ENCODE measurements at regions of chr2 and their contacts with region 1.

Region 1: GRCh38 chr2:135004005-135004746 is 43.1 kb downstream of the MAP3K19 start:
- DNase-seq: peak; percentile 85
- H3K4me3 Mint-ChIP-seq: no peak overlapping the region
- H3K27ac Mint-ChIP-seq: no peak overlapping the region
- H3K4me1 Mint-ChIP-seq: no peaks in the 10 kb centered on the region
- H3K27me3 Mint-ChIP-seq: no peaks in the 10 kb centered on the region
- CTCF ChIP-seq: peak; percentile 95

Region 2: DNA sequence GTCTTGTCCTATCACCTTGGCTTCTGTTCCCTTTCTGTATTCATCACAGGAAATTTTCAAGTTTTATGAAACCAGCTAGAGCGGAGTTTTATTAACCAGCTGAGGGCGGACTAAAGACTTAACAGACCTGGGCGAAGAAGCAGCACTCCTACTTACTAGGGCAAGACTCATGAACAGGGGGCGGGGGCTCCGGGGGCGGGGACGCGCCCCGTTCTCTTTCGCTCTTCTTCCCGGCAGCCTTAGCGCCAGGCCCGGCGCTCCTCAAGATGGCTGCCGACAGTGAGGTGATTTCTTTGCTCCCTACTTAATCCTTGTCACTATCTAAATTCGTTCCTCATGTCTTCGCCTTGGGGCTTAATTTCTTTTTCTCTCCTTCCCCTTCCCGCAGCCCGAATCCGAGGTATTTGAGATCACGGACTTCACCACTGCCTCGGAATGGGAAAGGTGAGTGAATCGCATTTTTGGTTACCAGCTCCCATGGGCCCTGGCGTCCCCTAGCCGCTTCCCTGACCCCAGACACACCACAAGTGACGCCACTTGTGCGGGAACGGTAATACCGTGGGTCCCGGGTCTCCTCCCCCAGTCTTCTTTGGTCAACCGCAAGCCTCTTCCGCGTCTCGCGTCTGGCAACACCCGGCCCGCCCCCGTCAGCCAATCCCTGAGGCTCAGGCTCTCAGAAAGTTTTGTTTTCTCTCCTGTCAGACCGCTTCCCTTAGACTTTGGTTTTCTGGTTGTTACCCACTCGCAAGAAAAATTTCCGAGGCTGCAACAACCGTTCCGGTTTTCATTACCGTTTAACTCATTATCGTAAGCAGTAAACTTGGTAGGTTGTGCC is 48.1 kb after region 1 on chr2 and contains the start of gene RAB3GAP1:
- CTCF ChIA-PET with region 1: interaction called, 3 read pairs
- intact Hi-C with region 1: loop called (anchors 2 kb)
- DNase-seq: peak; percentile 75
- H3K4me3 Mint-ChIP-seq: peak within 1 kb of the TSS; percentile 98
- H3K27ac Mint-ChIP-seq: peak within 1 kb of the TSS; percentile 99
- H3K4me1 Mint-ChIP-seq: peaks cover 62% of the 10 kb centered on the region
- H3K27me3 Mint-ChIP-seq: no peaks in the 10 kb centered on the region
- CTCF ChIP-seq: no peak
- total RNA-seq, gene RAB3GAP1: 47.6 and 50.6 TPM in 2 replicates

Region 3: DNA sequence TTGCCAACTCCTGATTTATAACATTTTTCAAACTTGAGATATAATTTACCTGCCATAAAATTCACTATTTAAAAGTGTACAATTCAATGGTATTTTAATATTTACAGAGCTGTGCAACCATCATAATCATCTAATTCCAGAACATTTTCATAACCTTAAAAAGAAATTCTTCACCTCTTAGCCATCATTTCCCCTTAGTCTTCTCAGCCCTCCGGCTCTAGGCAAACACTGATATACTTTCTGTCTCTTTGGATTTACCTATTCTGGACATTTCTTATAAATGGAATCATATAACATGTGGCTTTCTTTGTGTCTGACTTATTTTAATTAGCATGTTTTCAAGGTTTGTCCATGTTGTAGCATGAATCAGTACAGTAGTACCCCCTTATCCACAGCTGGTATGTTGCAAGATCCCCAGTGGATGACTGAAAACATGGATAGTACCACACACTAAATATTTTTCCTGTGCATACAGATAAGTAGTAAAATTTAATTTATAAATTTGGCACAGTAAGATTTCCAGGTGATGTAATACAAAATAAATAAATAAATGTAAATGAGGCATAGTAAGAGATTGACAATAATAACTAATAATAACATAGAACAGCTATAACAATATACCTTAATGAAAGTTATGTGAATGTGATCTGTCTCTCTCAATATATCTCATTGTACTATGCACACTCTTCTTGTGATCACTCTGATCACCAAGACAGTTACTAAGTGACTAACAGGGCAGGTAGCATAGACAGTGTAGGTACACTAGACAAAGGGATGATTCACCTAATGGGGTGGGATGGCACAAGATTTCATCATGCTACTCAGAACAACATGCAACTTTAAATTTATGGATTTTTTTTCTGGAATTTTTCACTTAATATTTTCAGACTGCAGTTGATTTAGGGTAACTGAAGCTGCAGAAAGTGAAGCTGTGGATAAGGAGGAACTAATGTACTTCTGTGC is 121.0 kb after region 1 on chr2:
- CTCF ChIA-PET with region 1: no interaction called
- intact Hi-C with region 1: loop called (anchors 5 kb)
- DNase-seq: no peak
- H3K4me3 Mint-ChIP-seq: no peak overlapping the region
- H3K27ac Mint-ChIP-seq: no peak overlapping the region
- H3K4me1 Mint-ChIP-seq: peaks cover 13% of the 10 kb centered on the region
- H3K27me3 Mint-ChIP-seq: no peaks in the 10 kb centered on the region
- CTCF ChIP-seq: no peak

Region 4: DNA sequence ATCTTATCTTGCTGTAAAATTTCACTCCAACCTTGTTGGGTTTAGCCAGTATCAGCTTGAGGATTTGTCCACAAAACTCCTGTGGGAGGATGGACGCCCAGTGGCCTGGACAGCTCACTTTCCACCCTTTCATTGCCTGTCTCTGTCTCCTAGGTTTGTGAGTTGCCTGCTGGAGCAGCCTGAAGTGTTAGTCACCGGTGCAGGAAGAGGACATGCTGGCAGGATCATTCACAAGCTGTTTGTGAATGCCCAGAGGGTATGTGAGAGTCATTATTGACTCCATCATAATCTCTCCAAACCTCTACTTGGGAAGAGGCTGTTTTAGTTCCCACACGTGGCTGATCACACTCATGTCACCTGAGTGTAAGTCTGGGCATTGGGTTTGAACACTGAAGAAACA is 160.3 kb after region 1 on chr2:
- CTCF ChIA-PET with region 1: no interaction called
- intact Hi-C with region 1: loop called (anchors 10 kb)
- DNase-seq: peak; percentile 5
- H3K4me3 Mint-ChIP-seq: no peak overlapping the region
- H3K27ac Mint-ChIP-seq: no peak overlapping the region
- H3K4me1 Mint-ChIP-seq: no peaks in the 10 kb centered on the region
- H3K27me3 Mint-ChIP-seq: no peaks in the 10 kb centered on the region
- CTCF ChIP-seq: no peak

Region 5: GRCh38 chr2:135709992-135710391 is 705.8 kb after region 1 on chr2:
- CTCF ChIA-PET with region 1: interaction called, 16 read pairs
- intact Hi-C with region 1: loop called (anchors 1 kb)
- DNase-seq: peak; percentile 70
- H3K4me3 Mint-ChIP-seq: no peak overlapping the region
- H3K27ac Mint-ChIP-seq: no peak overlapping the region
- H3K4me1 Mint-ChIP-seq: no peaks in the 10 kb centered on the region
- H3K27me3 Mint-ChIP-seq: no peaks in the 10 kb centered on the region
- CTCF ChIP-seq: peak; percentile 77

Measured in Calu3 (cell line).